ENCODE measurements at regions of chr22 and their contacts with region 1.

Region 1: GRCh38 chr22:17087498-17088131 is 2.8 kb downstream of the IL17RA start:
- DNase-seq: peak; percentile 82
- ATAC-seq: peak; percentile 9
- H3K4me3 Mint-ChIP-seq: peak overlapping the region; percentile 80
- H3K27ac Mint-ChIP-seq: peak overlapping the region; percentile 86
- H3K4me1 Mint-ChIP-seq: peaks cover 71% of the 10 kb centered on the region
- H3K27me3 Mint-ChIP-seq: peaks cover 4% of the 10 kb centered on the region

Region 2: DNA sequence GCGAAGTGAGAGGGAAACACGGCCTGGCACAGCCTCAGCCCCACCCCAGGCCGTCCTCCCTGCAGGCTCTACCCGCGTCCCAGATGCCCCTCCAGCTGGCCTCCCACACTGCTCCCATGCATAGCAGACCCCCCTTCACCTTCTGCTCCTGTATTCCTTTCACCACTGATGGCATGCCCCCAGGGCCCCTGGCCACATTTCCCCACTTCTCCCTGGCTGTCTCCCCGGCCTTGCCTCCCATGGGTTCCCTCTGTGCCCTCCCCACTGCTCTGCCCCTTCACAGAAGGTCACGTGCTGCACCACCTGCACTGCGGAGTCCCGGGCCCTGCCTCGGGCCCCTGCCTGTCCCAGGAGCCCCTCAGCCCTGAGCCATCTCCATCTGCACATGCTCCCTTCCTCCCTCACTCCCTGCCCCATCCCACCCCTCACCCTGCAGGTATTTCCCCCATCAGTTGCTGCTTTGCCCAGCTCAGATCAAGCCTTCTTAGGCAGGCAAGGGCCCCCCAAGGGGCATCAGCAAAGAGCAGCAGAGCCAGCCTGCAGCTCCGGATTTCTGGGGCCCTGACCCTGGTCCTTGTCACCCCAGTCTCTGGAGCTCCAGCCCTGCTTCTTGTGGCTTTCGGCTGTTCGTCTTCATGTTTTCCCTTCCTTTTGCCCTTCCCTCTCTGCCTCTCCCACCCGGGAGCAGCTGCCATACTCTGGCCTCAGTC is 126.0 kb before region 1 on chr22:
- CTCF ChIA-PET with region 1: no interaction called
- POLR2A ChIA-PET with region 1: no interaction called
- DNase-seq: no peak
- ATAC-seq: no peak
- H3K4me3 Mint-ChIP-seq: no peak overlapping the region
- H3K27ac Mint-ChIP-seq: no peak overlapping the region
- H3K4me1 Mint-ChIP-seq: no peaks in the 10 kb centered on the region
- H3K27me3 Mint-ChIP-seq: no peaks in the 10 kb centered on the region

Region 3: GRCh38 chr22:17063411-17064106 is 24.1 kb before region 1 on chr22:
- CTCF ChIA-PET with region 1: no interaction called
- POLR2A ChIA-PET with region 1: no interaction called
- DNase-seq: no peak
- ATAC-seq: no peak
- H3K4me3 Mint-ChIP-seq: no peak overlapping the region
- H3K27ac Mint-ChIP-seq: no peak overlapping the region
- H3K4me1 Mint-ChIP-seq: peaks cover 2% of the 10 kb centered on the region
- H3K27me3 Mint-ChIP-seq: peaks cover 11% of the 10 kb centered on the region

Region 4: GRCh38 chr22:17077255-17077654 is 10.4 kb before region 1 on chr22:
- CTCF ChIA-PET with region 1: interaction called, 12 read pairs
- POLR2A ChIA-PET with region 1: interaction called, 3 read pairs
- DNase-seq: no peak
- ATAC-seq: no peak
- H3K4me3 Mint-ChIP-seq: no peak overlapping the region
- H3K27ac Mint-ChIP-seq: no peak overlapping the region
- H3K4me1 Mint-ChIP-seq: peaks cover 16% of the 10 kb centered on the region
- H3K27me3 Mint-ChIP-seq: peaks cover 23% of the 10 kb centered on the region

Region 5: GRCh38 chr22:17130199-17130598 is 42.6 kb after region 1 on chr22:
- CTCF ChIA-PET with region 1: no interaction called
- POLR2A ChIA-PET with region 1: no interaction called
- DNase-seq: no peak
- ATAC-seq: no peak
- H3K4me3 Mint-ChIP-seq: no peak overlapping the region
- H3K27ac Mint-ChIP-seq: no peak overlapping the region
- H3K4me1 Mint-ChIP-seq: peaks cover 2% of the 10 kb centered on the region
- H3K27me3 Mint-ChIP-seq: peaks cover 2% of the 10 kb centered on the region

Region 6: DNA sequence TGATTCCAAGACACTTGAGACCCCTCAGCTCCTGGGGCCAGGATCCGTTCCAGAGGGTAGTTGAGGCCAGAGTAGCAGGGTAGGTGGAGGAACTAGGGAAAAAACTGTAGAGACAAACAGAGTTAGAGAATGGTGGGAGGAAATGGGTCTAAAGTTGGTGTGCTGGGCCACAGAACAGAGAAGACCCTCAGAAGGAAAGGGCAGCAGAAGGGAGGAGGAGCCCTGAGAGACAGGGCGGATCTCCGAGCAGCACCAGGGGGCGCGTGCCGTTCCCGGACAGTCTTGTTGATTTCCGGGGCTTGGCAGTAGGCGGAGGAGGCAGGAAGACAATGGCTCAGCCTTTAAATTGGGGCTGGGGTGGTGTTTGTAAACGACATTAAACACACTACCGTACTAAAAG is 279.2 kb after region 1 on chr22:
- CTCF ChIA-PET with region 1: no interaction called
- POLR2A ChIA-PET with region 1: no interaction called
- DNase-seq: peak; percentile 54
- ATAC-seq: peak; percentile 50
- H3K4me3 Mint-ChIP-seq: no peak overlapping the region
- H3K27ac Mint-ChIP-seq: no peak overlapping the region
- H3K4me1 Mint-ChIP-seq: peaks cover 15% of the 10 kb centered on the region
- H3K27me3 Mint-ChIP-seq: peaks cover 42% of the 10 kb centered on the region

Measured in activated CD8-positive, alpha-beta T cell treated with anti-CD3 and anti-CD28 coated beads, Interleukin-2, amount 10 ng/mL, durations not matched to agents 7 days and 5 days (primary cell).